ENCODE measurements at regions of chr16 and their contacts with region 1.

Region 1: GRCh38 chr16:57741660-57742191 is 6.2 kb downstream of the KATNB1 start:
- DNase-seq: no peak
- H3K4me3 ChIP-seq: no peak overlapping the region
- H3K27ac ChIP-seq: no peak overlapping the region
- H3K4me1 ChIP-seq: peaks cover 8% of the 10 kb centered on the region
- H3K27me3 ChIP-seq: no peaks in the 10 kb centered on the region
- CTCF ChIP-seq: no peak

Region 2: DNA sequence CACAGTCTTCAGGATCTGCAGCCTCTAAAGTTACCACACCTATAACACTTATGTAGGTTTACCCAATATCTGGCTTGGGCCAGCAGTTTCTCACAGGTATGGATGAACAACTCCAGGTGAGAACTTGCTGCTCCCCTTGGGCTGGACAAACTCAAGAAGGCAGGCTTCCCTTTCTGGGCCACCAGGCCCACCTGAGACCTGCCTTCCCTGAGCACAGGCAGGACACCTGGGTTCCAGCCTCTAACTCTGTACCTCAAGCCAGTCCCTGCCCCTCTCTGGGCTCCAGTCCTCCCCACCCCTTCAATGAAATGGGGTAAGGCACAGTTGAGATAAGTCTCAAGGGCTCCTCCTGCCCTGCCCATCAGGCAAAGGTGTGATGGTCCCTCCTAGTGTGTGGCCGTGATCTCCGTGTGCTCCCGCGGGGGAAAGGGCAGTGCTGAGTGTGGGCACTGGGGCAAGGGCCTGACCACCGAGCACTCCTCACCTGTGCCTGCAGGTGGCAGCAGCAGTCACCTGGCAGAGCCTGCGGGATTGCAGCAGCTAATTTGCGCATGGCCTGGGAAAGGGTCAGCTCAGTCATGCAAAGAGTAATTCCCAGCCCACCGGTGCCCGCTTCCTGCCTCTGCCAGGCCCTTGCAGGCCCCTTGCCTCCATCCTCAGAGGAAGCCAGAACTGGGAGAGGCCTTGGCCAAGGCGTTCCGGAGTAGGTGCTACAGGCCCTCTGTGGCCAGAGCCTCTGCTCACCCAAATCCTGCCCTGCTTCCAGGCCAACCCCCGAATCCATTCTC is 141.5 kb before region 1 on chr16:
- CTCF ChIA-PET with region 1: interaction called, 11 read pairs
- POLR2A ChIA-PET with region 1: no interaction called
- intact Hi-C with region 1: no loop called
- DNase-seq: peak in 1 of 2 experiments; percentile 74
- H3K4me3 ChIP-seq: no peak overlapping the region
- H3K27ac ChIP-seq: no peak overlapping the region
- H3K4me1 ChIP-seq: peaks cover 13% of the 10 kb centered on the region
- H3K27me3 ChIP-seq: no peaks in the 10 kb centered on the region
- CTCF ChIP-seq: peak; percentile 89